B cell (primary cell): ENCODE measurements at regions of chr10 and their contacts with region 1.

Region 1: GRCh38 chr10:50624866-50625692 is 1.3 kb upstream of the SGMS1 start:
- DNase-seq: peak; percentile 90
- ATAC-seq: peak; percentile 44
- H3K4me3 ChIP-seq: peak overlapping the region; percentile 86 to 98 (median 96)
- H3K4me3 Mint-ChIP-seq: peak overlapping the region; percentile 98
- H3K27ac ChIP-seq: peak overlapping the region; percentile 99 to 100
- H3K27ac Mint-ChIP-seq: peak overlapping the region; percentile 99
- H3K4me1 ChIP-seq: peaks cover 19 to 23% of the 10 kb centered on the region in 2 donors
- H3K4me1 Mint-ChIP-seq: peaks cover 26% of the 10 kb centered on the region
- H3K27me3 ChIP-seq: no peaks in the 10 kb centered on the region
- H3K27me3 Mint-ChIP-seq: no peaks in the 10 kb centered on the region
- CTCF ChIP-seq: peak; percentile 70

Region 2: GRCh38 chr10:49538381-49539319 is 1086.4 kb before region 1 on chr10 and contains the start of gene ERCC6:
- CTCF ChIA-PET with region 1: no interaction called
- POLR2A ChIA-PET with region 1: interaction called, 3 read pairs
- intact Hi-C with region 1: loop called (anchors 2 kb)
- DNase-seq: peak; percentile 97
- ATAC-seq: peak; percentile 87
- H3K4me3 ChIP-seq: peak within 1 kb of the TSS; percentile 75 to 93 (median 83)
- H3K4me3 Mint-ChIP-seq: peak within 1 kb of the TSS; percentile 86
- H3K27ac ChIP-seq: peak within 1 kb of the TSS; percentile 84 to 89
- H3K27ac Mint-ChIP-seq: peak within 1 kb of the TSS; percentile 95
- H3K4me1 ChIP-seq: peaks cover 19 to 35% of the 10 kb centered on the region in 2 donors
- H3K4me1 Mint-ChIP-seq: peaks cover 53% of the 10 kb centered on the region
- H3K27me3 ChIP-seq: peaks cover 0 to 11% (median 2%) of the 10 kb centered on the region in 4 experiments
- H3K27me3 Mint-ChIP-seq: peaks cover 13% of the 10 kb centered on the region
- CTCF ChIP-seq: no peak
- total RNA-seq, gene ERCC6: 59.8 and 65.9 TPM in 2 replicates

Region 3: DNA sequence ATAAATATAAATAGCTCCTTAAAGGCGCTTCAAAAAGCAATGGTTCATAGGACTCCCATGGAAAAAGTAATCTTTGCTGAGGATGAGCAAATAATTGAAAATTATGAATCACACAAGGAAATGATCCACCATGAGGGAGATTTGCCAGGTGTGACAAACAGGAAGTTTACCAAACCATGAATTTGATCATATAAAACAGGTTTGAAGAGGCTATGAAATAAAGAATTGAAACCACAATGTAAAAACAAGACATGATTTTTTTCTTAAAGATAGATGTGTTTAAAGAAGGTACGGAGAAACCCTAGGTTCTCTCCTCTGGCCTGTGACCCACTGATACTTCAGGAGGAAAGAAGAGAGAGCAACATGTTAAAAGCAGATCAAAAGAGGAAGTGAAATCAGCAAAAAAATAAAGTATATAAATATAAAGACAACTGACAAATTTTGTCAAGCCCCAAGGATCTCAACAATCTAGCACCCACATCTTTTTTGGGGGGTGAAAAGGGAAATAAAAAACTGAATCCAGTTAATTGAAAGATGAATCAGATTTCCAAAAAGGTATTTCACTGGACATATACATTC is 262.4 kb before region 1 on chr10:
- CTCF ChIA-PET with region 1: interaction called, 6 read pairs
- POLR2A ChIA-PET with region 1: interaction called, 7 read pairs
- intact Hi-C with region 1: loop called (anchors 1 kb)
- DNase-seq: peak; percentile 85
- ATAC-seq: peak; percentile 93
- H3K4me3 ChIP-seq: peak overlapping the region in 1 of 5 experiments; percentile 40
- H3K4me3 Mint-ChIP-seq: peak overlapping the region; percentile 6
- H3K27ac ChIP-seq: peak overlapping the region; percentile 84 to 95
- H3K27ac Mint-ChIP-seq: peak overlapping the region; percentile 89
- H3K4me1 ChIP-seq: peaks cover 43 to 44% of the 10 kb centered on the region in 2 donors
- H3K4me1 Mint-ChIP-seq: peaks cover 57% of the 10 kb centered on the region
- H3K27me3 ChIP-seq: no peaks in the 10 kb centered on the region
- H3K27me3 Mint-ChIP-seq: no peaks in the 10 kb centered on the region
- CTCF ChIP-seq: no peak

Region 4: GRCh38 chr10:50452603-50453002 is 172.5 kb before region 1 on chr10:
- CTCF ChIA-PET with region 1: no interaction called
- POLR2A ChIA-PET with region 1: no interaction called
- intact Hi-C with region 1: loop called (anchors 10 kb)
- DNase-seq: peak; percentile 58
- ATAC-seq: peak; percentile 72
- H3K4me3 ChIP-seq: no peak overlapping the region
- H3K4me3 Mint-ChIP-seq: peak overlapping the region; percentile 32
- H3K27ac ChIP-seq: peak overlapping the region; percentile 8 to 22
- H3K27ac Mint-ChIP-seq: peak overlapping the region; percentile 33
- H3K4me1 ChIP-seq: peaks cover 19 to 42% of the 10 kb centered on the region in 2 donors
- H3K4me1 Mint-ChIP-seq: peaks cover 57% of the 10 kb centered on the region
- H3K27me3 ChIP-seq: no peaks in the 10 kb centered on the region
- H3K27me3 Mint-ChIP-seq: no peaks in the 10 kb centered on the region
- CTCF ChIP-seq: no peak

Region 5: GRCh38 chr10:50653142-50653541 is 28.1 kb after region 1 on chr10:
- CTCF ChIA-PET with region 1: interaction called, 4 read pairs
- POLR2A ChIA-PET with region 1: interaction called, 4 read pairs
- intact Hi-C with region 1: loop called (anchors 2 kb)
- DNase-seq: peak; percentile 43
- ATAC-seq: peak; percentile 58
- H3K4me3 ChIP-seq: no peak overlapping the region
- H3K4me3 Mint-ChIP-seq: peak overlapping the region; percentile 8
- H3K27ac ChIP-seq: peak overlapping the region; percentile 15 to 60
- H3K27ac Mint-ChIP-seq: no peak overlapping the region
- H3K4me1 ChIP-seq: peaks cover 29 to 40% of the 10 kb centered on the region in 2 donors
- H3K4me1 Mint-ChIP-seq: peaks cover 39% of the 10 kb centered on the region
- H3K27me3 ChIP-seq: no peaks in the 10 kb centered on the region
- H3K27me3 Mint-ChIP-seq: no peaks in the 10 kb centered on the region
- CTCF ChIP-seq: peak; percentile 37

Region 6: DNA sequence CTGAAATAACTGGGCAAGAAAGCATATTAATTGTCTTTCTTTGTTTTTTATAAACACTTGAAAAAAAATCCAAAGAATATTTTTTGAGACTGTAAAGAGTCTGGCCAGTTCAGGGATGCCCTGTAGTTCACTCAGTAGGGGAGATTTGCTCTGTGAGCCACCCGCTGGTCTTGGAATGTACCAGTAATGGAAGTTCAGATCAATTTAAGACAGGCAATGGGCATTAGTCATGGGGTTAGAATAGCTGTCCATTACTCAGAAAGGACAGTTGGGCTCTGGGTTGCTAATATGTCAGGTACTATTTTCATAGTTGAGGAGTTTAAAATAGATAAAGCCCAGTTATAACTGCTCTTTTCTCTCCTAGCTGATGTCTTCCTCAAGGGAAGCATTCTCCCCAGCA is 221.7 kb after region 1 on chr10:
- CTCF ChIA-PET with region 1: no interaction called
- POLR2A ChIA-PET with region 1: no interaction called
- intact Hi-C with region 1: no loop called
- DNase-seq: no peak
- ATAC-seq: no peak
- H3K4me3 ChIP-seq: no peak overlapping the region
- H3K4me3 Mint-ChIP-seq: no peak overlapping the region
- H3K27ac ChIP-seq: no peak overlapping the region
- H3K27ac Mint-ChIP-seq: no peak overlapping the region
- H3K4me1 ChIP-seq: no peaks in the 10 kb centered on the region
- H3K4me1 Mint-ChIP-seq: no peaks in the 10 kb centered on the region
- H3K27me3 ChIP-seq: no peaks in the 10 kb centered on the region
- H3K27me3 Mint-ChIP-seq: no peaks in the 10 kb centered on the region
- CTCF ChIP-seq: no peak

Region 7: DNA sequence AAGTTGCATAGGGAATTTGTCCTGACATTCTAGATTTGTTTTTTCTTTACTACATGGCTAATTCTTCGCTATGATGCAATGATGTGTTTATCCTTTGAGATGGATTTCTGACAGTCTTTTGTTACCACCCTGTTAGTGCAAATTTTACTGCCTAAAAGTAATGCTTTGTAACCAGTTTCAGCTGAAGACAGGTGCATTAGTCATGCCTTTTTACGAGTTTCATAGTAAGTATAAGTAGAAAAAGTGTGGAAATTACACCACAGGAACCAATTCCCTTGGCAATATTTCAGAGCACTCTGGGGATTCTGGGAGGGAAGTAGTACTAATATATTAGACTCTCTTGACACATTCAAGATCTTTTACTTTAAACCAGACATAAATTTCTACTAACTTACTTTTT is 1431.2 kb after region 1 on chr10:
- CTCF ChIA-PET with region 1: no interaction called
- POLR2A ChIA-PET with region 1: no interaction called
- intact Hi-C with region 1: no loop called
- DNase-seq: no peak
- ATAC-seq: no peak
- H3K4me3 ChIP-seq: no peak overlapping the region
- H3K4me3 Mint-ChIP-seq: no peak overlapping the region
- H3K27ac ChIP-seq: no peak overlapping the region
- H3K27ac Mint-ChIP-seq: no peak overlapping the region
- H3K4me1 ChIP-seq: no peaks in the 10 kb centered on the region
- H3K4me1 Mint-ChIP-seq: no peaks in the 10 kb centered on the region
- H3K27me3 ChIP-seq: no peaks in the 10 kb centered on the region
- H3K27me3 Mint-ChIP-seq: no peaks in the 10 kb centered on the region
- CTCF ChIP-seq: no peak